Colonic mucosa (tissue), 4 donors: ENCODE measurements at regions of chr17 and their contacts with region 1.

Region 1: DNA sequence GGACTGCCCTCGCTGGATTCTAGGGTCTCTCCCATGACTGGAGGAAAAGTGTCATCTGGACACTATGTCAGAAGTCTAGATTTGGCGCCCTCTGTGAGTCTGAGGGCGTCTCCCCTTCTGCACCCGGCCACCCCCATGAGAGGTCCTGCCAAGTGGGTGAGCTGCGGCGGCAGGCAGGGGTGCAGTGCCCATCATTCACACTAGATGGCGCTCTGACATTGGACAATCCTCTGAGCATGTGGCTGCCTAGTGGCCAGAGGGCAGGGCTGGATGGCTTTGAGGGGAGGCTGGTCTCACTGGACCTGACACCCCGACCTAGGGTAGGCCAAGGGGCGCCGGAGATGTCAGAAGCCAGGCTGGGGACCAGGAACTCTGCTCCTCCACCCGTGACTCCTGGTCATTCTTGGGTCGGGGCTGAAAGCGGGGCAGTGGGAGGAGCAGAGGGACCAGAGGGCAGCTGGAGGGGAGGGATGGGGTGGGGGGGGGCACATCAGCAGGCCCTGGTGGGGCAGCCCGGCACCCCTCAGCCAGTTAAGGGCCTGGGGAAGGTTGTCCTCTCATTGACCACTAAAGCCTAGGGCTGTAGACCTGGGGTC is 28.0 kb downstream of the MRM1 start:
- DNase-seq: peak; percentile 80
- H3K4me3 ChIP-seq: no peak overlapping the region
- H3K27ac ChIP-seq: no peak overlapping the region
- H3K4me1 ChIP-seq: no peaks in the 10 kb centered on the region
- H3K27me3 ChIP-seq: no peaks in the 10 kb centered on the region
- CTCF ChIP-seq: peak; percentile 99

Region 2: DNA sequence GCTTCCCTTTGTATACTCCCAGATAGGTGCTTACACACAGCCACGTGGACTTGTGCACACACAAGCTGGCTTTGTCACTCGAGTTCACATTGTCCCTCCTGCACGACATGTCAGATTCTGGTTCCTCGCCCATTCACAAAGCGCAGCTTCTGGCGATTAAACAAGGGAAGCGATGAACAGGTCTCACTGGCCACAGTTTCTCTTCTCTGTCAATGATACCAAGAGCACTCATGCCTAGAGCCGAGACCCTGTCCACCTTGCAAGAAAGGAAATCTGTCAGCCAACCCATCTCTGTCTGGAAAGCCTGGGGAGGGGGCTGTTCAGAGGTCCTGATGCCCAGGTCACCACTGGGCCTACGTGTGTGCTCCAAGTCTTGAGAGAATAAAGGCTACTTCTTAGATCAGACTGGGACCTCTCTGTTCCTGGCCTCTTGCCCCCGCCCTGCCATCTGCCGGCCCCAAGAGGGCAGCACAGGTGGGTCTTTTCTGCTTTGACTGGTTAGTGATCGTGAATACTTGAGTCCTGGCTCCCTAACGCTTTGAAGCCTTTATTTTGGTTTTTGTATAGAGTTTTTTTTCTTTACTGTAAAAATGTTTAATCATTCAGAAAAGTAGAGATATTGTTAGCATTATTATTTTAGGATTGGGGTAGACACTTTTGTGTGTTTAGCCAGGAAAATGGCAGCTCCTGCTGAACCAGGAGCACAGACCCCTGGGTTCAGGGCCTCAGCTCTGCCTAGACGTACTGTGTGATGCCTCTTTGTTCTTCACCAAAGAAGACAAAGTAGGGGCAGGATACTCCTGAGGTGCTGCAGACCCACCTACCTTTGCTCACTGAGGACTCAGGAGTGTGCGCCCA is 76.8 kb after region 1 on chr17:
- intact Hi-C with region 1: loop called (anchors 5 kb)
- DNase-seq: peak; percentile 64
- H3K4me3 ChIP-seq: no peak overlapping the region
- H3K27ac ChIP-seq: no peak overlapping the region
- H3K4me1 ChIP-seq: no peaks in the 10 kb centered on the region
- H3K27me3 ChIP-seq: peaks cover 6% of the 10 kb centered on the region
- CTCF ChIP-seq: peak; percentile 60

Region 3: GRCh38 chr17:36755586-36755985 is 126.2 kb after region 1 on chr17:
- intact Hi-C with region 1: loop called (anchors 2 kb)
- DNase-seq: peak; percentile 74
- H3K4me3 ChIP-seq: no peak overlapping the region
- H3K27ac ChIP-seq: no peak overlapping the region
- H3K4me1 ChIP-seq: no peaks in the 10 kb centered on the region
- H3K27me3 ChIP-seq: no peaks in the 10 kb centered on the region
- CTCF ChIP-seq: peak; percentile 33

Region 4: GRCh38 chr17:37047631-37048104 is 418.3 kb after region 1 on chr17:
- intact Hi-C with region 1: loop called (anchors 5 kb)
- DNase-seq: peak; percentile 77
- H3K4me3 ChIP-seq: no peak overlapping the region
- H3K27ac ChIP-seq: no peak overlapping the region
- H3K4me1 ChIP-seq: no peaks in the 10 kb centered on the region
- H3K27me3 ChIP-seq: no peaks in the 10 kb centered on the region
- CTCF ChIP-seq: peak; percentile 82